Ascending aorta (tissue), 2 donors: ENCODE measurements at regions of chr17 and their contacts with region 1.

Region 1: DNA sequence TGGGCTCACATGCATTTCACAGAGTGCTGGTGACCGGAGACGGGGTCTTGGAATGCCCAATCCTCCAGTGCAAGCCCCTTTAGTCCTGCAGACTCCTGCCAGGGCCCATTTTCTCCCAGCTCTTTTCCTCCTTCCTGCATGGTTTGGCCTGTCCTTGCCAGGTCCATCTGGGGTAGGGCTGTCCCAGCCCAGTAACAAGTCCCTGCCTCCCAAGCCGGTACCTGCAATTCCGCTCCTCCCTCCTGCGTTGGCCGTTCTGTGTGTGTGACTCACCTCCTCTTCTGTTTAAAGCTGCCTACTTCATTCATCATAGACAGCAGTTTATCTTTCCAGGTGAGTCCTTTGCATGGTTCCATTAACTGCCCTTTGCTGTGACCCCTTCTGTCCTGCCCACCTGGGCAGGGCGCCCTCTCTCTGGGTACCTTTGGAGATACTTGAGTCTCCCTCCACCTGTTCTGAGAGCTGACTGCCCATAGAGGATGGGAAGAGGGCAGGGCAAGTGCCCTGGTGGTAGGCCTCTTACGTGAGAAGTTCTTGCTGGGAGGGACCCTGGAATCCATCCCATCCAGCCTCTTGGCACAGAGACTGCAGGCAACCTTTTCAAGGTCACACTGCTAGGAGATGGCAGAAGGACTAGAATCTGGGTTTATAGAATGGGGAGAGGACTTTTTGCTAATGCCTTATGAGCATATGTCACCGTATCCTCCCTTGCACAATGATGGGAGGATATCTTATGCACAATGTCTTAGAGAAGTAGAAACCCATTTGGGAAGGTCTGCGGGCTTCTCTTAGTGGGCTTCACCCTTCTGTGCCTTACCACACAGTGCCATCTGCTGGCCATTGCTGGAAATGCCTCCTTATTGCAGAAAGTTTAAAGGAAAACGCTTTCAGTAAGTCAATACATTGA is 29.7 kb upstream of the LGALS9 start:
- DNase-seq: peak in 1 of 2 donors; percentile 88
- H3K4me3 ChIP-seq: no peak overlapping the region
- H3K27ac ChIP-seq: no peak overlapping the region
- H3K4me1 ChIP-seq: peaks cover 0 to 2% of the 10 kb centered on the region in 2 donors
- H3K27me3 ChIP-seq: no peaks in the 10 kb centered on the region
- CTCF ChIP-seq: peak; percentile 82 to 91 (median 85)

Region 2: DNA sequence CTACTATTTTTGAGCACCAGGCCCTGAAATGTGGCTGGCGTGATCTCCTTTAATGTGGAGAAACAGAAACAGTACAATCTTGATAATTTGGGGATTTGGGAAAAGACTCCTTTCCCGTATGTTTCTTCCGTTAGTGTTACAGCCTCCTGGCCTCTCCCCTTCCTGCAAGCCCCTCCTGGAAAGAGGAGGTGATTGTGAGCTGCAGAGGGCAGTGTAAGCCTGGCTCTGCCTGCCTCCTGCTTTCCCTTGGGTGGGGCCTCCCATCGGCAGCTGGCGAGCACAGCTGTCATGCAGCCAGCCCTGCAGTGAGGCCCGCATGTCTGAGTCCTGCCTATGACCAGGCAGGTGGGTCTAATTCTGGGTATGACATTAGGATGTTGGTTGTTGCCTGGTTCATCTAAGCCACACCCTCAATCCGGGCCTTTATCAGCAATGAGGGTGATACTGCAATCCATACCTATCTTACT is 356.1 kb before region 1 on chr17:
- intact Hi-C with region 1: loop called (anchors 2 kb)
- DNase-seq: peak; percentile 79 to 93
- H3K4me3 ChIP-seq: peak overlapping the region; percentile 52 to 56
- H3K27ac ChIP-seq: peak overlapping the region; percentile 90 to 94
- H3K4me1 ChIP-seq: peaks cover 4 to 37% of the 10 kb centered on the region in 2 donors
- H3K27me3 ChIP-seq: no peaks in the 10 kb centered on the region
- CTCF ChIP-seq: peak; percentile 61 to 76 (median 70)

Region 3: DNA sequence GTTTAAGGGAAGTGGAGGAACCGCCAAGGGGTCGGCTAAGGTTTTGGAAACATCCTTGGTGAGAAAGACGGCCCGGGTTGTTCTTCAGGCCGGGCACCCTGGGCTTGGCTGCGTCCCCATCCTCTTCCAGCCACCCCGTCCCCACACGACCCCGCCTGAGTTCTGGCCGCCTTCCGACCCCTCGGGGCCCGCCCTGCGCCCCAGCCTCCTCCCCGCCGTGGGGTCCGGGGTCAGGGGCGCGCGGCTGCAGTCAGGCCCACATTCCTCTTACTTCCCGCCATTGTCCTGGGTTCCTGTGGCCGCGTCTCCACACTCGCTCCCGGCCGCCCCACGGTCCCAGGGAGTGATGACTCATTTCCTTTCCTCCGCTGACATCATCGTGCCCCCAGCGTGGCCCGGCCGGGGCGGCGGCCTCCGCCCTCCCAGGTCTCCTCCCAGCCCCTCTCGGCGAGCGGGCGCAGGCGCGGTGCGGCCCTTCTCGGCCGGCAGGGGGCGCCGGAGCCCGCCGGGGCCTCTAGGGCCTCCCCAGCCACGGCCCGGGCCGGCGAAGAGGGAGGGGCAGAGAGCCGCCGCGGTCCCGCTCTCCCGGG is 247.8 kb before region 1 on chr17:
- intact Hi-C with region 1: loop called (anchors 1 kb)
- DNase-seq: peak; percentile 74 to 96
- H3K4me3 ChIP-seq: peak overlapping the region; percentile 63 to 73
- H3K27ac ChIP-seq: peak overlapping the region; percentile 95 to 98
- H3K4me1 ChIP-seq: peaks cover 3 to 11% of the 10 kb centered on the region in 2 donors
- H3K27me3 ChIP-seq: no peaks in the 10 kb centered on the region
- CTCF ChIP-seq: peak; percentile 36 to 100 (median 72)

Region 4: GRCh38 chr17:27494192-27495091 is 106.9 kb before region 1 on chr17:
- intact Hi-C with region 1: loop called (anchors 1 kb)
- DNase-seq: peak; percentile 58 to 91
- H3K4me3 ChIP-seq: peak overlapping the region; percentile 16 to 47
- H3K27ac ChIP-seq: peak overlapping the region; percentile 65 to 69
- H3K4me1 ChIP-seq: peaks cover 0 to 12% of the 10 kb centered on the region in 2 donors
- H3K27me3 ChIP-seq: no peaks in the 10 kb centered on the region
- CTCF ChIP-seq: peak in 2 of 3 experiments; percentile 27 to 62

Region 5: DNA sequence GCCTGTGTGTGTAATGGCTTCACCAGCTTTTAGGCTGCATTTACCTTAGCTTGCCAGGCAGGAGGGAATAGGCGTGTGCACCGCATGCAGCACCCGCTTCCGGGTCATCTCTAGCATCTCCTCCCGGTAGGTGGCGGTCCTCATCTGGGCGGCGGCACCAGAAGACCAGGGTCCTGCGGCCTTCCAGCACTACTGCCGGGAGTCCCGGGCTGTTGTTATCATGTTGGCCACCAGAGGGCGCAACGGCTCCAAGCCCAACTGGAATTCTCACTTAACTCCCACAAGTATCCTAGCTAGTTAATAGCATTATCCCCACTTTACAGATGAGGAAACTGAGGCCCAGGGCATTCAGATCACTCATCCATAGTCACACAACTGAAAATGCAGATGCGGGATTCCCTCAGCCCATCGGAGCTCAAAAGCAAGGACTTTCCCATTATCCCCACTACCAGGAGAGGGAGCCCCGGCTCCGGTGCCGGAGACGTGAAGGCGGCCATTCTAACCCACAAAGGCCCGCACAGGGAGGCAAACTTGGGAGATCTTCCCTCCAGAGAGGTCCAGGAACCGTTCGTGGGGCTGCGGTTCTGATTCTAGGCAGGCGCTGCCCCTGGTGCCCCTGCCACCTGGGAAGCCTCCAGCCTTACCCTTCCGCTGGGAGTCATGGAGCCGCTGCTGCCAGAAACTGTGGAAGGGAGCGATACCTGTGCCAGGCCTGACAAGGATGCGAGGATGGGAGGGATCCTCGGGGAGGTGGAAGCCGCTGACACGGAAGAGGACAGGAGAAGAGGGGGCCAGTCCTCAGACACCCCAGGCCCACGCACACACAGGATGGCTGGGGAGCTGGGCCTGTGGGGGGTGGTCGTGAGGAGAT is 53.6 kb after region 1 on chr17:
- intact Hi-C with region 1: loop called (anchors 1 kb)
- DNase-seq: no peak
- H3K4me3 ChIP-seq: no peak overlapping the region
- H3K27ac ChIP-seq: no peak overlapping the region
- H3K4me1 ChIP-seq: no peaks in the 10 kb centered on the region
- H3K27me3 ChIP-seq: no peaks in the 10 kb centered on the region
- CTCF ChIP-seq: peak; percentile 54 to 85 (median 78)